ENCODE measurements at regions of chr11 and their contacts with region 1.

Region 1: GRCh38 chr11:118689851-118690552 is 10.6 kb upstream of the TREH start:
- DNase-seq: peak; percentile 93
- H3K4me3 ChIP-seq: peak overlapping the region in 1 of 3 experiments; percentile 19
- H3K27ac ChIP-seq: peak overlapping the region; percentile 16
- H3K4me1 ChIP-seq: peaks cover 37% of the 10 kb centered on the region
- H3K27me3 ChIP-seq: no peaks in the 10 kb centered on the region
- CTCF ChIP-seq: peak; percentile 82 to 90

Region 2: GRCh38 chr11:118679483-118679882 is 10.5 kb before region 1 on chr11 and contains the start of gene TREH:
- CTCF ChIA-PET with region 1: interaction called, 15 read pairs
- dilution Hi-C with region 1: no loop called
- in situ Hi-C with region 1: no loop called
- intact Hi-C with region 1: no loop called
- DNase-seq: no peak
- H3K4me3 ChIP-seq: peak within 1 kb of the TSS in 1 of 3 experiments; percentile 24
- H3K27ac ChIP-seq: no peak within 1 kb of the TSS
- H3K4me1 ChIP-seq: peaks cover 11% of the 10 kb centered on the region
- H3K27me3 ChIP-seq: no peaks in the 10 kb centered on the region
- CTCF ChIP-seq: no peak
- total RNA-seq, gene TREH: 0.33 TPM in 1 of 2 donors, not detected in the other

Region 3: DNA sequence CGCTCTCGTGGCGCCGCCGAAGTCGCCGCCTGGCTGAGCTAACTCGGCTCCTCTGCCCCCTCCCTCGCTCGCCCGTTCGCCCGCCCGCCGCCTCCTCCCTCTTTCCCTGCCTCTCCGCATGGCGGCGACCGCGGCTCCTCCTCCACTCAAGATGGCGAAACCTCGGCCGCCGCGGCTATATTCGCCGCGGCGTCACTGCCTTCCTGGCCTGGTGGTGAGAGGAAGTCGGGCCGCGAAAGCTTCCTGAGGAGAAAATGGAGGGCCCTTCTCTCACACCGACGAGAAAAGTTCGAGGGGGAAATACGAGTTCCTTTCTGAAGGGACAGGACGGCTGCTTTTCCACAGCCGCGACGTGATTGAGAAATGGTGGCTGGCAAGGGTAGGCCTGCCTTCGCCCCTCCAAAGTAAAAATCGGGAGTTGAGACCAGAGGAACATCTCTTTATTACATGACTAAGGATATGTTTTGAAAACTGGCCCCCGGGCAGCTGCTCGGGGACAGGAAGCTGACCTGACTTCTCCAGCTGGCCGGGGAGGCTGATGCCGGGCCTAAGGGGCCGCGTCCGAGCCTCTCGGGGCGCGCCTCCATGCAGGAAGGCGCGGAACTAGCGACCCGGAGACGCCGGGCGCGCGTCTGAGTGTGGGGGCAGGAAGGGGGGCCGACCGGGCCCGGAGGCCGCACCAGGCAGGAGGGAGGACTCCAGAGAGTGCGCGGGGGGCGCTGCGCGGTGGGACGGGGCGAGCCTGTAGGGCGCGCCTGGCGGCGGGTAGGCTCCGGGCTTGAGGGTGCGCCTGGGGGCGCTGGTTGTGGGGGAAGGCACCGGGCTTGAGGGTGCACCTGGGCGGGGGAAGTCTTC is 101.3 kb after region 1 on chr11 and contains the start of gene DDX6:
- CTCF ChIA-PET with region 1: interaction called, 4 read pairs
- dilution Hi-C with region 1: no loop called
- in situ Hi-C with region 1: no loop called
- intact Hi-C with region 1: loop called (anchors 1 kb)
- DNase-seq: peak; percentile 81
- H3K4me3 ChIP-seq: peak within 1 kb of the TSS; percentile 90 to 95 (median 95)
- H3K27ac ChIP-seq: peak within 1 kb of the TSS; percentile 93
- H3K4me1 ChIP-seq: peaks cover 18% of the 10 kb centered on the region
- H3K27me3 ChIP-seq: no peaks in the 10 kb centered on the region
- CTCF ChIP-seq: peak in 1 of 2 donors; percentile 54
- total RNA-seq, gene DDX6: 96.8 to 162 TPM

Region 4: GRCh38 chr11:118928108-118928870 is 238.3 kb after region 1 on chr11:
- CTCF ChIA-PET with region 1: interaction called, 11 read pairs
- dilution Hi-C with region 1: no loop called
- in situ Hi-C with region 1: loop called in 1 of 2 experiments (anchors 10 kb)
- intact Hi-C with region 1: loop called (anchors 1 kb)
- DNase-seq: peak; percentile 92
- H3K4me3 ChIP-seq: peak overlapping the region; percentile 77 to 85 (median 79)
- H3K27ac ChIP-seq: peak overlapping the region; percentile 84
- H3K4me1 ChIP-seq: peaks cover 44% of the 10 kb centered on the region
- H3K27me3 ChIP-seq: no peaks in the 10 kb centered on the region
- CTCF ChIP-seq: peak; percentile 94 to 95

Region 5: GRCh38 chr11:119030329-119031049 is 340.5 kb after region 1 on chr11 and contains the start of gene SLC37A4:
- CTCF ChIA-PET with region 1: no interaction called
- dilution Hi-C with region 1: no loop called
- in situ Hi-C with region 1: no loop called
- intact Hi-C with region 1: loop called (anchors 10 kb)
- DNase-seq: peak; percentile 96
- H3K4me3 ChIP-seq: peak within 1 kb of the TSS; percentile 78 to 97 (median 87)
- H3K27ac ChIP-seq: peak within 1 kb of the TSS; percentile 52
- H3K4me1 ChIP-seq: peaks cover 8% of the 10 kb centered on the region
- H3K27me3 ChIP-seq: no peaks in the 10 kb centered on the region
- CTCF ChIP-seq: peak in 1 of 2 donors; percentile 88
- total RNA-seq, gene SLC37A4: 15.8 to 16.7 TPM